ENCODE measurements at regions of chr7 and their contacts with region 1.

Region 1: DNA sequence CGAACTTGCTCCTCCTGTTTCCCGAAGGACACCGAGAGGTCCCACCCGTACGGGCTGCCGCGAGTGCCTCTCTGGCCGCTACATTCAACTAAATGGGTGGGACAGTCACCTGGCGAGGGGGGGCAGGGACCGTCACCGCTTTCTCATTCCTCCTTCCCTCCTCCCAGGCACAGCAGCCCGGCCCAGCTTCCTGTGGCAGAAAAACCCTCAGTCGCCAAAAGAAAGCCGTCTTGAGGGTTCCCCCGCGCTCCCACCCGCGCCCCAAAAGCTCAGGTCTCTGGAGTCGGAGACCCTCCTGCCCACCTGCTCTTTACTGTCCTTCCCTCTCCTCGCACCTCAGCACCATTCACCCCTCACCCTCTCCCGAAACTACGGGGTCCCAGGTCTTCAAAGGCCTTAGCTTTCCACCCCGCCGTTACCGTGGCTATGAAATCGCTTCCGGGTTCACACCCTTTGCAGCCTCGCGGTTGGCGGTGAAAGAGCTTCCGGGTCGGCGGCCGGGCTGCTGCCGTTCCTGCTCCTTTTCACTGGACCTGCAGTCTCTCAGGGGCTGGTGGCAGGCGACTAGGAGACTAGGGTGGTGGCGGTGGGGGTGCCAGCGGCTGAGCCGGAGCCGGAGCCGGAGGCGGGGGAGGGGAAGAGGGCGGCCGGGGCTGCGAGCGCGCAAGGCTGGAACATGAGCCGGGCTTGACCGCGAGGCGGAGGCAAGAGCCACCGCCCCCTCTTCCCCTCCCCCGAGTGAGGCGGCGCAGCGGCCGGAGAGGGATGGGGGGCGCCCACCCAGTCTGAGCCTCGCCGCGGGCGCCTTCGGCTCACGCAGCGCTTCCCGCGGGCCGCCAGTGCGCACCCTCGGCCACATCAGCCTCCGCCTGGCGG is at the starts of genes ANKIB1 and KRIT1:
- DNase-seq: peak; percentile 92
- H3K4me3 ChIP-seq: peak within 1 kb of the TSS; percentile 89
- H3K27ac ChIP-seq: peak within 1 kb of the TSS; percentile 76
- H3K4me1 ChIP-seq: peaks cover 23% of the 10 kb centered on the region
- CTCF ChIP-seq: peak; percentile 27; the same call in 1 of the 2 replicates
- total RNA-seq, gene ANKIB1: 15.4 and 25.3 TPM in 2 replicates
- total RNA-seq, gene KRIT1: 35.7 and 50.0 TPM in 2 replicates

Region 2: DNA sequence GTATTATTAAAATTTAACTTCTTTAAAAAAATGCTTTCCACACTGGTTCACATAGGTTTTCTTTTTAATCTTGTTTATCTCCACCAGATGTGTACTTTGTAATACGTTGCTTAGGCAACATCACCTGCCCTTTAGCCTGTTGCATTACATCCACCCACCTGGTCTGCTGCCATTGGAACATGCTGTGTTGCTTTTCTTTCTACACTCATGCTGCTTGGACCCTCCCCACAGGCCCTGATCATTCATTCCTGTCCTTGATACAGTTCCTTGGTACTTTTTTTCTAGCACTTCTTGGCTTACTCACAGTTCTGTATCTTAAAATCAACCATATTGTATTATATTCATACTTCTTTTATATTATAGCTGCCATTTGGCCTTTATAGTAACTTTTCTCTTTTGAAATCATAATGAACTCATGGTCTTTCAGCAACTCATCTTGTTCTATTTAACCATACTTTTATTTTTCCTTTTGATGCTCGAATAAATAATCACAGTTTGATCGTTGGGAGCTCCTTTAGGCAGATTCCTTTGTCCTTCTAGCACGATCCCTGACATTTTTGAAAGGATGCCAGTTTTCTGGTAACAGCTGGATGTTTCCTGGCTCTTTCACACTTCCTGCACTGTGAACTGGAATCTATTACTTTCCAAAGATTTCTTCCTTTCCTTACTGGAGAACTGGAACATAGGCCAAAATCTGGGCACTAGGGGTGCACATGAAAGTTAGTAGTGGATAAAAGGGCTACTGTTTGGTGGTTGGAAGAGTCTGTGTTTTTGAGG is 1524.6 kb before region 1 on chr7:
- CTCF ChIA-PET with region 1: no interaction called
- POLR2A ChIA-PET with region 1: no interaction called
- intact Hi-C with region 1: loop called (anchors 10 kb)
- DNase-seq: peak; percentile 67
- H3K4me3 ChIP-seq: peak overlapping the region; percentile 10
- H3K27ac ChIP-seq: peak overlapping the region; percentile 53
- H3K4me1 ChIP-seq: peaks cover 100% of the 10 kb centered on the region
- CTCF ChIP-seq: no peak

Region 3: GRCh38 chr7:91973639-91974038 is 272.1 kb before region 1 on chr7:
- CTCF ChIA-PET with region 1: no interaction called
- POLR2A ChIA-PET with region 1: no interaction called
- intact Hi-C with region 1: no loop called
- DNase-seq: no peak
- H3K4me3 ChIP-seq: no peak overlapping the region
- H3K27ac ChIP-seq: no peak overlapping the region
- H3K4me1 ChIP-seq: no peaks in the 10 kb centered on the region
- CTCF ChIP-seq: no peak

Region 4: DNA sequence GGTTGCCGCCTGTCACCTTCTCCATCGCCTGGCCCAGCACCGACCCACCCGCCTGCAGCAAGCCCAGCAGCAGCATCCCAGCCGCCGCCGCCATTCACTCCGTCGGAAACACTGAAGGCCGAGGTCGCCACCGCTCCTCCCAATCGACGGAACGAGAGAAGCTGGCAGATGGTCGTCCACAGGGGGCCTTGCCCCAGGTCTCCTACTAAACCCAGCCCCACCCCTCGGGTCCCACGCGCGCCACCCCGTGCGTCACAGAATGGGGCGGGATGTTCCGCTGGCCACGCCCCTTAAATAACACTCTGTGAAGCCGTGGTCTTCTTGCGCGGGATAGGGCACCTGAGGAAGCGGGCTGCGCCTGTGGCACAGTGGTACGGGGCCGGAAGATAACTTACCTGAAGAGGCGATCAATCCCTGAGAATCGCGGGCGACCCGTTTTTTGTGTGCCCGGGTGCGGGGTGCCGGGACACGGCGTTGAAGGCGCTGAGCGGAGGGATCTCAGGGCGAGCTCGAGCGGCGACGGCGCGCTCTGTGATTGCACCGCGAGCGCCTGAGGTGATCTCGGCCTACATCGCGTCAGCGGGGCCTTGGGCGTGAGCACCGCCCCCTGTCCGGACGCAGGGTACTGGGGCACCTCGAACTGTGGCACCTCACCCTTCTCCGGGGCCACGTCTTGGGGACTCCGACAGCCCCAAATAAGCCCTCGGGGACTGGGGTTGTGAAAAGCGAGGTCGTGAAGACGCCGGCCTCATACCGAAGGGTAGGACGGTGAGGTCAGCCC is 111.3 kb before region 1 on chr7 and contains the start of gene CYP51A1:
- CTCF ChIA-PET with region 1: interaction called, 4 read pairs
- POLR2A ChIA-PET with region 1: interaction called, 7 read pairs
- intact Hi-C with region 1: loop called (anchors 2 kb)
- DNase-seq: peak; percentile 94
- H3K4me3 ChIP-seq: peak within 1 kb of the TSS; percentile 92
- H3K27ac ChIP-seq: peak within 1 kb of the TSS; percentile 68
- H3K4me1 ChIP-seq: peaks cover 40% of the 10 kb centered on the region
- CTCF ChIP-seq: 0 out of 2 replicates have a peak, but pooled peaks have one; percentile 22
- total RNA-seq, gene CYP51A1: 51.7 and 53.4 TPM in 2 replicates

Region 5: GRCh38 chr7:92198743-92199142 is 47.0 kb before region 1 on chr7:
- CTCF ChIA-PET with region 1: no interaction called
- POLR2A ChIA-PET with region 1: no interaction called
- intact Hi-C with region 1: no loop called
- DNase-seq: no peak
- H3K4me3 ChIP-seq: no peak overlapping the region
- H3K27ac ChIP-seq: no peak overlapping the region
- H3K4me1 ChIP-seq: no peaks in the 10 kb centered on the region
- CTCF ChIP-seq: no peak

Region 6: GRCh38 chr7:92275327-92275726 is 29.6 kb after region 1 on chr7:
- CTCF ChIA-PET with region 1: no interaction called
- POLR2A ChIA-PET with region 1: interaction called, 10 read pairs
- intact Hi-C with region 1: no loop called
- DNase-seq: no peak
- H3K4me3 ChIP-seq: no peak overlapping the region
- H3K27ac ChIP-seq: no peak overlapping the region
- H3K4me1 ChIP-seq: peaks cover 26% of the 10 kb centered on the region
- CTCF ChIP-seq: no peak

Region 7: DNA sequence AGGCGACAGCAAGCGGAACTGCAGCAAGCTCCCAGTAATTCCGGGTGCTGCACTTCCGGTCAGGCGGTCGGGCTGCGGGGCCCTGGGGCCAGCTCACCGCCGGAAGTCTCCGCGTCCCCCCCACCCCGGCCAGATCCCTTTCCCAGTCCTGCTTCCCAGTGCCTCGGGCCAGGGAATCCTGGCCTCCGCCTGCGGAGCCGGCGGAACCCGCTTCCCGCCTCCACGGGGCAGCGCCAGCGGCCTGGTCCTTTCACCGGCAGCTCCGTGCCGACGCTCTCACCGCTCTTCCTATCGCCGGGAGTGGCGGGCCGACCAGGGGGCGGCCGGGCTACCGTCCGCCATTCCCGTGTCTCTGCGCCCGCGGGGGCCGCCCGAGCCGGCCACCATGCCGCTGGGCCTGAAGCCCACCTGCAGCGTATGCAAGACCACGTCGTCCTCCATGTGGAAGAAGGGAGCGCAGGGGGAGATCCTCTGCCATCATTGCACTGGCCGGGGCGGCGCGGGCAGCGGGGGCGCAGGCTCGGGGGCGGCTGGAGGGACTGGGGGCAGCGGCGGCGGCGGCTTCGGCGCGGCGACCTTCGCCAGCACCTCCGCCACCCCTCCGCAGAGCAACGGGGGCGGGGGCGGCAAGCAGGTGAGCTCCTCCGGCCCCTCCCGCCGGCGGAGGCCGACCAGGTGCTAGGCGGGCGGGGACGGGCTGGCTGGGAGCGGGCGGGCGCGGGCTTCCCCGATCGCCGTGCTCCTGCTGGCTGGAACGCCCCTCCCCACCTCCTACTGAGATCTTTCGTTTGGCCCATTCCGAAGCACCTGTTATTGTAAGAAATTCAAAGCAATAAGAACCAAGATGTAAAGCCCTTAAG is 201.8 kb after region 1 on chr7 and contains the start of gene GATAD1:
- CTCF ChIA-PET with region 1: no interaction called
- POLR2A ChIA-PET with region 1: interaction called, 11 read pairs
- intact Hi-C with region 1: loop called (anchors 5 kb)
- DNase-seq: peak; percentile 92
- H3K4me3 ChIP-seq: peak within 1 kb of the TSS; percentile 90
- H3K27ac ChIP-seq: peak within 1 kb of the TSS; percentile 68
- H3K4me1 ChIP-seq: peaks cover 5% of the 10 kb centered on the region
- CTCF ChIP-seq: peak; percentile 86
- total RNA-seq, gene GATAD1: 15.5 and 19.6 TPM in 2 replicates

Region 8: DNA sequence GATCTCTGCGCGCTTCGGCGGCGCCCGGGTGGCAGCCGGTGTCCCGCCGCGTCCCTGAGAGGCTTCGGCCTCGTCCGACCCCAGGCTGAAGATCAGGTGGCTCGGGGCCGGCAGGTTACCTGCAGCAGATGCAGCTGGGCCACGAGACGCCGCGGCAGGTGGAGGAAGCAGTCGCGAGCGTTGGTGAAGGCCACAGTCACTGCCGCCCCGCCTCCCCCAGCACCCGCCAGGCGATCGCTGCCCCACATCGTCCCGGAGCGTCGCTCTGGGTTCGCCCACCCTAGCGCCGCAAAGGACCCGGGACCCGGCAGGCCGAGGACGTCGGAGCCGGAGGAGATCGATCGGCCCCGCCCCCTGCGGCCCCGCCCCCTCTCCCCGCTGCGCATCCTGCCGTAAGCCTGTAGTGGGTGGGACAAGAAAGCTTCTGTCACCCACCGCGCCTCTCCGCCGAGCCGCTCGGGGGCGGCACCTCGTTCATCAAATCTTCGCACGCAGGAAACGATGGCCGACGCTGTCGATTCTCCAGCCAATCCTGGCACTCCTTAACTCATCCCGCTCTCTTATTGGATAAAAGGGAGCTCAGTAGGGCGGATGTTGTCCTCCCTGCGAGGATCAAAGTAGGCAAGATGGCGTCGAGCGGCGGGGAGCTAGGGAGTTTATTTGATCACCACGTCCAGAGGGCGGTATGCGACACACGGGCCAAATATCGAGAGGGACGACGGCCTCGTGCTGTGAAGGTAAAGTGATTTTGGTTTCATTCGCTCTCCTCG is 282.6 kb after region 1 on chr7 and contains the starts of genes PEX1 and RBM48:
- CTCF ChIA-PET with region 1: no interaction called
- POLR2A ChIA-PET with region 1: interaction called, 4 read pairs
- intact Hi-C with region 1: loop called (anchors 2 kb)
- DNase-seq: peak; percentile 99
- H3K4me3 ChIP-seq: peak within 1 kb of the TSS; percentile 84
- H3K27ac ChIP-seq: peak within 1 kb of the TSS; percentile 81
- H3K4me1 ChIP-seq: peaks cover 14% of the 10 kb centered on the region
- CTCF ChIP-seq: peak; percentile 78
- total RNA-seq, gene PEX1: 28.3 and 28.7 TPM in 2 replicates
- total RNA-seq, gene RBM48: 7.7 and 10.7 TPM in 2 replicates